GM23248 (cell line): ENCODE measurements at regions of chr12 and their contacts with region 1.

Region 1: DNA sequence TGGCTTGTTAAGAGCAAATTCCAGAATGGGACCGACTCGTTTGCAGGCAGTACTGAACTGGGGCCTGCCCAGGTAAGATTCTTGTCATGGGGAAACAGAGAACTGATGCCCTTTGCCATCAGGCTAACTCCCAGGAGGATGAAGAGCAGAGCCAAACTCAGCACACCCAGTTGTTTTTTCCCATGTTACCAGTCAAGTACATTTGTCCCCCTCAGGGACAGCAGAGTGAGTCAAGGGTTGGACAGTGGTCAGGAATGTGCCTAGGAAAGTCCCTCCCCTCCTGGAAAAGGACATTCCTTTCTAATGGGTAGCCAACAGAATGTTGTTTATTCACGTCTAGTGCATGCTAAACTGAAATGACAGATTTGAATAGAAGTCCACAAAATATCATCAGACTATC is 1.6 kb downstream of the ART4 start:
- DNase-seq: peak; percentile 61
- H3K4me3 ChIP-seq: 0 out of 2 replicates have a peak overlapping the region, but pooled peaks have one; percentile 2
- H3K27ac ChIP-seq: no peak overlapping the region
- H3K4me1 ChIP-seq: peaks cover 40% of the 10 kb centered on the region
- H3K27me3 ChIP-seq: no peaks in the 10 kb centered on the region

Region 2: GRCh38 chr12:14314801-14315200 is 527.0 kb before region 1 on chr12:
- in situ Hi-C with region 1: no loop called
- DNase-seq: no peak
- H3K4me3 ChIP-seq: no peak overlapping the region
- H3K27ac ChIP-seq: no peak overlapping the region
- H3K4me1 ChIP-seq: peaks cover 3% of the 10 kb centered on the region; the same call in 1 of the 2 replicates
- H3K27me3 ChIP-seq: no peaks in the 10 kb centered on the region

Region 3: GRCh38 chr12:14995583-14996425 is 154.0 kb after region 1 on chr12:
- in situ Hi-C with region 1: loop called (anchors 5 kb)
- DNase-seq: peak; percentile 74
- H3K4me3 ChIP-seq: no peak overlapping the region
- H3K27ac ChIP-seq: no peak overlapping the region
- H3K4me1 ChIP-seq: no peaks in the 10 kb centered on the region
- H3K27me3 ChIP-seq: no peaks in the 10 kb centered on the region